Adrenal gland (tissue), 19 donors: ENCODE measurements at regions of chr1 and their contacts with region 1.

Region 1: DNA sequence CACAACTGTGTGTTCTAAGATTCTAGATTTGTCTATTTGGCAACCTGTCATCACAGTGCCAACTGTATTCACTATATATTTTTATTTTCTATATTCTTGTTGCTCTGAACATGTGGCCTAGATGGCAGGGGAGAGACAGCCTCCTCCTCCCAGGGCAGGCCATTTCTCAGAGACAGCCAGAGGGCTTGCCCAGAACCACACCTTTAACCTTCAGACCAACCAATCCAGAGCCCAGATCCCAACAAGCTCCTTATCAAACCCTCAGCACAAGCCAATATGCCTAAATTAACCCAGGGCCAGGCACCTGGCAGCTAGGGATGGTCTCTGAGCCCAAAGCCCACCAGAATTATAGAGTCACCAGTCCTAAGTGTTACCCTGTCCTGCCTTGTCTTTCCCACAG is 19.3 kb downstream of the TRIM11 start:
- DNase-seq: no peak
- H3K4me3 ChIP-seq: no peak overlapping the region
- H3K27ac ChIP-seq: no peak overlapping the region
- H3K4me1 ChIP-seq: no peaks in the 10 kb centered on the region
- H3K27me3 ChIP-seq: no peaks in the 10 kb centered on the region
- CTCF ChIP-seq: no peak
- POLR2A ChIP-seq: no peak

Region 2: DNA sequence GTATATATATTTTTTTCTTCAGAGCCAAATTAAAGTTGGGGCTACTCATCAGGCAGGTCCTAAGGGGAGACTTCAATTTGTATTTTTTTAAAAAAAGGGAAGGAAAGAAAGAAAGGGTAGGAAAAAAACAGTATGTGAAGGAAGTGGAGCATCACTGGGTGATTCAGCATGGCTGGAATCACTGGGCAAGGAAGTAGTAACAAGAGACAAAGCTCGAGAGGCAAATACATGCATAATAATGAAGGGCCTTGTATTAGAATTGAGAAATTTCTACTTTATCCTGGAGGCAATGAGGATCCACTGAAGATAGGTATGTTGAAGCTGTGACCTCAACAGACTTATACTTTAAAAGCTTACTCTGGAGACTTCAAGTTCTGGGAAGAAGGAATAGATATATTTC is 1262.8 kb before region 1 on chr1:
- intact Hi-C with region 1: no loop called
- DNase-seq: no peak
- H3K4me3 ChIP-seq: no peak overlapping the region
- H3K27ac ChIP-seq: no peak overlapping the region
- H3K4me1 ChIP-seq: no peaks in the 10 kb centered on the region
- H3K27me3 ChIP-seq: no peaks in the 10 kb centered on the region
- CTCF ChIP-seq: no peak
- POLR2A ChIP-seq: no peak

Region 3: GRCh38 chr1:228445843-228446650 is 58.7 kb after region 1 on chr1:
- intact Hi-C with region 1: loop called in 1 of 2 experiments (anchors 5 kb)
- DNase-seq: peak in 6 of 7 donors; percentile 31 to 66 (median 52)
- H3K4me3 ChIP-seq: peak overlapping the region in 2 of 4 donors; percentile 21 to 29
- H3K27ac ChIP-seq: no peak overlapping the region
- H3K4me1 ChIP-seq: no peaks in the 10 kb centered on the region
- H3K27me3 ChIP-seq: peaks cover 5% of the 10 kb centered on the region
- CTCF ChIP-seq: no peak
- POLR2A ChIP-seq: peak in 1 of 2 donors; percentile 34